Right ventricle myocardium inferior (tissue), 1 donor: ENCODE measurements at regions of chr15 and their contacts with region 1.

Region 1: GRCh38 chr15:97521381-97522285 is 438.9 kb upstream of the ARRDC4 start:
- DNase-seq: peak; percentile 56
- ATAC-seq: peak; percentile 96

Region 2: DNA sequence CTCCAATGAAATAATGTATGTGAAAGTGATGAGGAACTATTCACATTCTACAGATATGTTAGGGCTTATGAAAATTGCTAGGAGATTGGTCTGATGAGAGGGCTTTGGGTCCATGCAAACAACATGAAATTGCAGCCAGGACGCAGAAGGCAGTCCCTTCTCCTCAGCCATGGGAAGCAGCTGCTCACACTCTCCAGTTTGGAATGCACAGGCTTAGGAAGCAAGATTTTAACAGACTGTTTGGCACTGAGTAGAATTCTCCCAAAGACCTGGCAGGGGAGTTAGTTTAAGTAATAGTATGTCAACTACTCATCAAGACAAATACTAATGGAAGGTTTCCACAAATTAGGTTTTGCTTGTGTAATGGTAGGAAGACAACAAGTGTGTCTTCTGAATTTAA is 61.9 kb before region 1 on chr15:
- intact Hi-C with region 1: loop called (anchors 1 kb)
- DNase-seq: no peak
- ATAC-seq: no peak

Region 3: DNA sequence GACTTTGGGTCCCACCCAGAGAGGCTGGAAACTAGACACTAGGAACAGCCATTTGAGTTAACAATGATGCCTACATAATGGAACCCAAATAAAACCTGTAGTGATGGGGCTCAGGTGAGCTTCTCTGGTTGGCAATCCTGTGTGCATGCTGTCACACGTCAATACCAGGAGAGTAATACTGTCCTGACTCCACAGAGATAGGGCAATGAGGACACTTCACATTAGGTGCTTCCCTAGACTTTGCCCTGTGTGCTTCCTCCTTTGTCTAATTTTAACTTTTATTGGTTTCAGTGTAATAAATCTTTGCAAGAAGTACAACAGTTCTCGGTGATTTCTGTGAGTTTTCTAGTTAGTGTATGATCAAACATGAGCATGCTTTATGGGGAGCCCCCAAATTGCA is 157.0 kb after region 1 on chr15:
- intact Hi-C with region 1: no loop called
- DNase-seq: no peak
- ATAC-seq: no peak

Region 4: GRCh38 chr15:97692301-97693015 is 170.8 kb after region 1 on chr15:
- intact Hi-C with region 1: loop called (anchors 5 kb)
- DNase-seq: no peak
- ATAC-seq: peak; percentile 95

Region 5: GRCh38 chr15:97884513-97885131 is 363.0 kb after region 1 on chr15:
- intact Hi-C with region 1: loop called (anchors 5 kb)
- DNase-seq: no peak
- ATAC-seq: peak; percentile 50

Region 6: DNA sequence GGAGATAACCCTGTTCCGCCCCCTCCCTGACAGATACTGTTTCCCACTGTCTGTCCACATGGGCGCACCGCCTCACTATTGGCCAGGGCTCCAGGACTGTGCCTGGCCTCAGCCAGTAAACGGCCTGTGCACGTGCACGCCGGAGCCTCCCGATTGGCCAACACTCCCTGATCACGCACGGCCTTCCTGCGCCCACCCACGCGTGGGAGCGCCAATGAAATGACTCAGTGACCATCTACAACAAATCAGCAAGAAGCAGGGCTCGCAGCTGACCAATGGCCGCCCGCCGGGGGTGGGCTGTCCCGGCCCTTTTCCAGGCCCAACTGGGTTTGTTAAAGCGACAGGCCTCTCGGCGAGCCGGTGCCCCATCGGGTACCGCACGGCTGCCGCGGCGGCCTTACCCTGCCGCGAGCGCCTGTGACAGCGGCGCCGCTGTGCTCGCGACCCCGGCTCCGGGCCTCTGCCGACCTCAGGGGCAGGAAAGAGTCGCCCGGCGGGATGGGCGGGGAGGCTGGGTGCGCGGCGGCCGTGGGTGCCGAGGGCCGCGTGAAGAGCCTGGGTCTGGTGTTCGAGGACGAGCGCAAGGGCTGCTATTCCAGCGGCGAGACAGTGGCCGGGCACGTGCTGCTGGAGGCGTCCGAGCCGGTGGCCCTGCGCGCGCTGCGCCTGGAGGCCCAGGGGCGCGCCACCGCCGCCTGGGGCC is 438.9 kb after region 1 on chr15 and contains the start of gene ARRDC4:
- intact Hi-C with region 1: loop called (anchors 10 kb)
- DNase-seq: peak; percentile 100
- ATAC-seq: peak; percentile 99
- total RNA-seq, gene ARRDC4: 15.9 TPM